Activated CD4-positive, alpha-beta T cell treated with anti-CD3 and anti-CD28 coated beads, Interleukin-2, amount 10 ng/mL, durations not matched to agents 24 days and 14 days (primary cell): ENCODE measurements at regions of chr3 and their contacts with region 1.

Region 1: DNA sequence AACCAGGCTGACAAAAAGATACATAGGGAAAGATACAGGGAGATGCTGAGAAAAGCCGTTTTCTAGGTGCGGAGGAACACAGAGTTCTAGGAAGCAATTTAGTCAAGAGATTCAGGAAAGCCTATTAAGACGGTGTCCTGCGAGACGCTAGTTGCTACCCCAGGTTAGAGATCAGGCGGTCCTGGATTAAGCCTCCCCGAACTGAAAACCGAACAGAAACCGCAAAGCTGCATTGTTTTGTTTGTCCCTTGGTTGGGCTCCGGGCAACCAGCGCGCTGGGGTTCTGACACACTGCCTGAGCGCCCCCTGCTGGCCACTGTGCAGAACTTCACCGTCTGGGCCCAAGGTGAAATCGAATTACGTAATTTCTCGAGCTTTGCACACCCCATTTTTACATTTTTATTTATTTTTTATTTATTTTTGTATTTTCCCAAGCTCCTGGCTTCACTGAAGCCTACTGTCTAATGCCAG is 37.3 kb upstream of the NDUFB4 start:
- DNase-seq: peak; percentile 97
- H3K4me3 Mint-ChIP-seq: peak overlapping the region; percentile 80
- H3K27ac Mint-ChIP-seq: peak overlapping the region; percentile 82
- H3K4me1 Mint-ChIP-seq: peaks cover 12% of the 10 kb centered on the region
- H3K27me3 Mint-ChIP-seq: peaks cover 7% of the 10 kb centered on the region

Region 2: GRCh38 chr3:119819806-119820205 is 739.0 kb before region 1 on chr3:
- intact Hi-C with region 1: loop called (anchors 10 kb)
- DNase-seq: no peak
- H3K4me3 Mint-ChIP-seq: no peak overlapping the region
- H3K27ac Mint-ChIP-seq: no peak overlapping the region
- H3K4me1 Mint-ChIP-seq: no peaks in the 10 kb centered on the region
- H3K27me3 Mint-ChIP-seq: no peaks in the 10 kb centered on the region

Region 3: GRCh38 chr3:120245386-120245785 is 313.4 kb before region 1 on chr3:
- intact Hi-C with region 1: loop called (anchors 1 kb)
- DNase-seq: no peak
- H3K4me3 Mint-ChIP-seq: no peak overlapping the region
- H3K27ac Mint-ChIP-seq: no peak overlapping the region
- H3K4me1 Mint-ChIP-seq: no peaks in the 10 kb centered on the region
- H3K27me3 Mint-ChIP-seq: peaks cover 26% of the 10 kb centered on the region

Region 4: DNA sequence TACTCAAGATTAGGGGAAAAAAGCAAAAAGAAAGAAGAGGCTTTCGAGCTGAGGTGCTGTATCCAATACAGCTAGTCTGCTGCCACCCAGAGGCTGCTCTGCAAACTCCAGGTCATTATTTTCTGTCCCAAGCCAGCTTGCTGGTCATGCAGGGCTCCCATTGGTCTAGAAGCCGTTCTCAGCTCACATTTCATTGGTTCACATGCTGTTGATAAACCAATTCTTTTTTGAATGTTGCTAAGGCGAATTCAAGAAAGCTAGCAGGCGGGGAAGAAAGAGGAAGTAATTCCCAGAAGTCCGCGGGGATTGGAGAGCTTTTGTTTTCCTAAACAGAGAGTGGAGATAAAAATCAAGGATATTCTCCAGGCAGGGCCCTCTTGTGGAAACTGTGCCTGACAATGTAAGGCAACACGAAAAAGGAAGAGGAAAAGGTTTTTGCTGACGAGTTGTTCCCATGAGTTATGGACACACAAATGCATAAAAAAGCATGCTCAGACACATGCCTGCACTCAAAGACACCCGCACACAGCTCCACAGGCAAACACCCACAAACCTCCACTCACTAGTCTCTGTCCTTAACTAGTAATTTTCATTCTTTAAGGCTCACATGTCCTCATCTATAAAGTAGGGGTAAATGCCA is 141.4 kb before region 1 on chr3:
- intact Hi-C with region 1: loop called (anchors 1 kb)
- DNase-seq: peak; percentile 95
- H3K4me3 Mint-ChIP-seq: peak overlapping the region; percentile 90
- H3K27ac Mint-ChIP-seq: peak overlapping the region; percentile 46
- H3K4me1 Mint-ChIP-seq: peaks cover 14% of the 10 kb centered on the region
- H3K27me3 Mint-ChIP-seq: peaks cover 5% of the 10 kb centered on the region

Region 5: GRCh38 chr3:120596116-120596852 is 37.5 kb after region 1 on chr3 and contains the start of gene NDUFB4:
- intact Hi-C with region 1: loop called (anchors 1 kb)
- DNase-seq: peak; percentile 98
- H3K4me3 Mint-ChIP-seq: peak within 1 kb of the TSS; percentile 91
- H3K27ac Mint-ChIP-seq: peak within 1 kb of the TSS; percentile 94
- H3K4me1 Mint-ChIP-seq: peaks cover 15% of the 10 kb centered on the region
- H3K27me3 Mint-ChIP-seq: peaks cover 14% of the 10 kb centered on the region
- total RNA-seq, gene NDUFB4: 116 and 123 TPM in 2 replicates

Region 6: GRCh38 chr3:120742198-120742849 is 183.5 kb after region 1 on chr3 and contains the starts of genes GTF2E1 and RABL3:
- intact Hi-C with region 1: loop called (anchors 1 kb)
- DNase-seq: peak; percentile 99
- H3K4me3 Mint-ChIP-seq: peak within 1 kb of the TSS; percentile 97
- H3K27ac Mint-ChIP-seq: peak within 1 kb of the TSS; percentile 98
- H3K4me1 Mint-ChIP-seq: peaks cover 25% of the 10 kb centered on the region
- H3K27me3 Mint-ChIP-seq: peaks cover 2% of the 10 kb centered on the region
- total RNA-seq, gene GTF2E1: 25.9 and 27.8 TPM in 2 replicates
- total RNA-seq, gene RABL3: 27.6 and 29.3 TPM in 2 replicates

Region 7: DNA sequence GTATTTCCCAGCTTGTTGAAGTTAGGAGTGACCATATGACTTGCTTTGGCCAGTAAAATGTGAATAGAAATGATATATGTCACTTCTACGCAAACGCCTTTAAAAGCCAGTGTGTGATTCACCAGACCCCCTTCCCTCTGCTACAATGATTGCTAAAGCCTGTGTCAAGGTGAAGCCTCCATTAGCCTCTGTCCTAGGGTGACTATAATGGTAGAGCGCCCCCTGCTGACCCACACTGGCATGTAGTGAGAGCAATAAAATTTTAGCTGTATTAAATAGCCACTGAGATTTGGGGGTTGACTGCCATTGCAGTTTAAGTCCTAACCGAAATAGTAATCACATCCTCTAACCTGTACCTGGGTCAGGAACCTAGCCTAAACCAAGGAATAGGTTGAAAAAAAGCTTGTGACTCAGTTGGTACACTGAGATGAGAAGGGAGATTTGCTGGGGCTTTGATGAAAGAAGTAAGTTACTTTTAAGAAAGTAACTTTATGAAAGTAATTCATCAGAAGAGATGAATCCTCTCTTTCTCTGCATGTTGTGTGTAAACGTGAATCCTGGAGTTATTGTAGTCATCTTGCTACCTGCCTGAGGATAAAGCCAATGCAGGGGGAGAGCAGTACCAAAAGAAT is 236.3 kb after region 1 on chr3:
- intact Hi-C with region 1: loop called (anchors 1 kb)
- DNase-seq: peak; percentile 95
- H3K4me3 Mint-ChIP-seq: no peak overlapping the region
- H3K27ac Mint-ChIP-seq: no peak overlapping the region
- H3K4me1 Mint-ChIP-seq: no peaks in the 10 kb centered on the region
- H3K27me3 Mint-ChIP-seq: peaks cover 3% of the 10 kb centered on the region